ENCODE measurements at regions of chr2 and their contacts with region 1.

Region 1: GRCh38 chr2:23260621-23261020 is 124.4 kb upstream of the KLHL29 start:
- DNase-seq: no peak
- ATAC-seq: no peak
- H3K4me3 Mint-ChIP-seq: no peak overlapping the region
- H3K27ac Mint-ChIP-seq: no peak overlapping the region
- H3K4me1 Mint-ChIP-seq: no peaks in the 10 kb centered on the region
- H3K27me3 Mint-ChIP-seq: no peaks in the 10 kb centered on the region
- CTCF ChIP-seq: no peak

Region 2: GRCh38 chr2:23135481-23136100 is 125.0 kb before region 1 on chr2:
- CTCF ChIA-PET with region 1: no interaction called
- POLR2A ChIA-PET with region 1: no interaction called
- intact Hi-C with region 1: loop called (anchors 5 kb)
- DNase-seq: no peak
- ATAC-seq: no peak
- H3K4me3 Mint-ChIP-seq: no peak overlapping the region
- H3K27ac Mint-ChIP-seq: no peak overlapping the region
- H3K4me1 Mint-ChIP-seq: no peaks in the 10 kb centered on the region
- H3K27me3 Mint-ChIP-seq: peaks cover 4% of the 10 kb centered on the region
- CTCF ChIP-seq: no peak

Region 3: GRCh38 chr2:23249348-23249747 is 11.3 kb before region 1 on chr2:
- CTCF ChIA-PET with region 1: no interaction called
- POLR2A ChIA-PET with region 1: no interaction called
- intact Hi-C with region 1: no loop called
- DNase-seq: no peak
- ATAC-seq: no peak
- H3K4me3 Mint-ChIP-seq: no peak overlapping the region
- H3K27ac Mint-ChIP-seq: no peak overlapping the region
- H3K4me1 Mint-ChIP-seq: no peaks in the 10 kb centered on the region
- H3K27me3 Mint-ChIP-seq: peaks cover 15% of the 10 kb centered on the region
- CTCF ChIP-seq: no peak

Measured in activated B cell treated with CpG ODN at 0.5 μM for 24 hours (primary cell).